Calu3 (cell line): ENCODE measurements at regions of chr5 and their contacts with region 1.

Region 1: DNA sequence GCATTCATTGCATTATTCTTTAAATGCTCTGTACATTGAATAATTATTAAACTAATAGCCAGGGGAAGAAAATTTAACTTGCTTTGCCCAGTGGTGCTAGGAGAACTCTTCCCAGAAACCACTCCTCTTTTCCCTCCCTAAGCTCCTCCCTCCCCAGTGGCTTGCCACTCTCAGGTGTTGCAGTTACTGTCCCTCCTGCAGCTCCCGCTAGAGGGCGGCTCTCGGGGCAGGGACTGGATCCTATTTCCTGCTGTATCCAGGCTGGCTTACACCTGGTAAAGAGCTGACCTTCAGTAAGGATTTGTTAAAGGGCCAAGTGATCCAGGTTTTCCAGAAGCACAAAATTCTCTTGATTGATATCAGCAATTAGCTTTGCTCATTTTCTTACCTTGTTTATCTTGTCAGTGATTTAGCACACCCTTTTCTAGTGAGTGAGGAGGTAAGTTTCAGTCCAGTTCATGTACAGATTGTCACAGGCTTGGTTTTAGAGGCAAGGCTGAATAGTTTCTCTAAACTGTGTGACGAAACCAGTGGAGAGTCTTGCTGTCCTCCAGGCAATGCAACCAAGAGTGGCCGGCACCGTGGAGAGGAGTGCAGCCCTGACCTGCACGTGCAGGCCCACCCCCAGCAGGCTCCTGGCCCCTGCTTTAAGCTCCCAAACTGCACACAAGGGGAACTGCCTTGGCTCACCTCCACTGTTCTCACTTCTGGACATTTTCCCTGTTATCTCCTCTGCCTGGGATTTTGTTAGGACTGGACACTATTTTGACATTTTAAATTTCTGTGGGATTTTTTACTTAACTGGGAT is 423.8 kb downstream of the SPOCK1 start:
- DNase-seq: peak; percentile 96
- H3K4me3 Mint-ChIP-seq: no peak overlapping the region
- H3K27ac Mint-ChIP-seq: no peak overlapping the region
- H3K4me1 Mint-ChIP-seq: peaks cover 61% of the 10 kb centered on the region
- H3K27me3 Mint-ChIP-seq: no peaks in the 10 kb centered on the region
- CTCF ChIP-seq: peak; percentile 87

Region 2: GRCh38 chr5:136750224-136750862 is 325.0 kb before region 1 on chr5:
- CTCF ChIA-PET with region 1: no interaction called
- intact Hi-C with region 1: no loop called
- DNase-seq: no peak
- H3K4me3 Mint-ChIP-seq: no peak overlapping the region
- H3K27ac Mint-ChIP-seq: no peak overlapping the region
- H3K4me1 Mint-ChIP-seq: peaks cover 11% of the 10 kb centered on the region
- H3K27me3 Mint-ChIP-seq: peaks cover 26% of the 10 kb centered on the region
- CTCF ChIP-seq: no peak

Region 3: GRCh38 chr5:137016783-137017338 is 58.5 kb before region 1 on chr5:
- CTCF ChIA-PET with region 1: no interaction called
- intact Hi-C with region 1: no loop called
- DNase-seq: no peak
- H3K4me3 Mint-ChIP-seq: no peak overlapping the region
- H3K27ac Mint-ChIP-seq: no peak overlapping the region
- H3K4me1 Mint-ChIP-seq: no peaks in the 10 kb centered on the region
- H3K27me3 Mint-ChIP-seq: no peaks in the 10 kb centered on the region
- CTCF ChIP-seq: no peak

Region 4: GRCh38 chr5:137142764-137143605 is 67.6 kb after region 1 on chr5:
- CTCF ChIA-PET with region 1: interaction called, 13 read pairs
- intact Hi-C with region 1: loop called (anchors 1 kb)
- DNase-seq: peak; percentile 60
- H3K4me3 Mint-ChIP-seq: no peak overlapping the region
- H3K27ac Mint-ChIP-seq: peak overlapping the region; percentile 53
- H3K4me1 Mint-ChIP-seq: peaks cover 48% of the 10 kb centered on the region
- H3K27me3 Mint-ChIP-seq: no peaks in the 10 kb centered on the region
- CTCF ChIP-seq: no peak

Region 5: DNA sequence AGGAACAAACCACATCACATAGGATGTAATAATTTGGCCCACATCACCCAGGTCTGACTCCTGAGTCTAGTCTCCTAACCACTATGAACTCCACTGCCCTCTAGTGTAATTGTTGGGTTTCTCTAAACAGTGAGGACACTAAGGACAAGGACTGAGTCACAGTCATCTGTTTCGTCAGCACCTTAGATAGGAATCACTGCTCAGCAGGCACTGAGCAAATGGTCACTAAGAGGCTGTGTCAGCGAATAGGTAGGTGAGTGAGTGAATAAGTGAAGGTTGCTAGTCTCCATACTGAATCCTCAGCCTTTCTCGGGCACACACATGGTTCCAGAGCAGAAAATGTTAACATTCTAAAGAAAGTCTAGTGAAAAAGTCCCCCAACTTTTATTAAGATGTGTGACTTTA is 145.2 kb after region 1 on chr5:
- CTCF ChIA-PET with region 1: interaction called, 53 read pairs
- intact Hi-C with region 1: loop called (anchors 1 kb)
- DNase-seq: peak; percentile 71
- H3K4me3 Mint-ChIP-seq: no peak overlapping the region
- H3K27ac Mint-ChIP-seq: no peak overlapping the region
- H3K4me1 Mint-ChIP-seq: peaks cover 51% of the 10 kb centered on the region
- H3K27me3 Mint-ChIP-seq: no peaks in the 10 kb centered on the region
- CTCF ChIP-seq: peak; percentile 56

Region 6: GRCh38 chr5:137498736-137499505 is 423.6 kb after region 1 on chr5 and contains the start of gene SPOCK1:
- CTCF ChIA-PET with region 1: no interaction called
- intact Hi-C with region 1: loop called (anchors 10 kb)
- DNase-seq: peak; percentile 90
- H3K4me3 Mint-ChIP-seq: no peak within 1 kb of the TSS
- H3K27ac Mint-ChIP-seq: no peak within 1 kb of the TSS
- H3K4me1 Mint-ChIP-seq: no peaks in the 10 kb centered on the region
- H3K27me3 Mint-ChIP-seq: peaks cover 48% of the 10 kb centered on the region
- CTCF ChIP-seq: peak; percentile 92
- total RNA-seq, gene SPOCK1: 3.2 and 3.3 TPM in 2 replicates